Activated CD4-positive, alpha-beta T cell treated with anti-CD3 and anti-CD28 coated beads, Interleukin-2, amount 10 ng/mL, durations not matched to agents 7 days and 5 days (primary cell): ENCODE measurements at regions of chr3 and their contacts with region 1.

Region 1: DNA sequence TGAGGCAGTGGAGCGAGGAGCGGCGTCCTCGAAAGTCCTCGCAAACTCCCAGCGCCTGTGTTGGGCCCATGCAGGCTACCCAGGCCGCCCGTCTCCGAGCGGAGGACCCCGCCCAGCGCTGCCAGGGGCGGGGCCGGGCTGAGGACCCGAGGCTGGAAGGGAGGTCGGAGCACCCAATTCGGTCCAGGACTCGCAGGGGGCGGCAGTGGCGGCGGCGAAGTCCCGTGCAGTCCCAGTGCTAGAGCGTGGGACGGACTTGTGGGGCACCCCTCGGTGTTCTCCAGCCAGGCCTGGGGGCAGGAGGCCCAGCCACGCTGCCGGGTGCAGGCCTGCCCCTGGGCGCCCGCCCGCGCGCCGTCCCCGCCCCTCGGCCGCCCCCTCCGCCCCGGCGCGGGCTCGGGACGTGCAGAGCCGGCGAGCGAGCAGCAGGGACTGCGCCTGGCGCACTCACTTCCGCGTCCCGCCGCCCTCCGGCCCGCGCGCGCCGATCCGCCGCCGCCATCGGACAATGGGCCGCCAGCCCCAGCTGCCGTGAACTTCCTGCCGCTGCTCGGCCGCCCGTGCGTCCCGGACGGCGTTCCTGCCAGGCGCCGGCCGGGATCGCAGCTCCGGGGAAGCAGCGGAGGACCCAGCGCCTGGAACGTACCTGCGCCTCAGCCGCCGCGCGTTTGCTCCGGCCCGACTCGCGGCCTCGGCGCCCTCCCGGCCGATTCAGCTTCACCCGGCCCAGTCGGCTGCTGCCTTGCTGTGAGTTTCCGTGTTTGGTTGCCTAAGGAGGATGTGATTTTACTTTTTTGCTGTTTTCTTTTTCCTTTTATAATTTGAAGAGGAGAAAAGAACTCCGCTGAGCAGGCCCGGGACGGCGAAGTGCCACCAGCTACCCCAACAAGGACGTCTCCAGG is 592 bp upstream of the LIMD1 start:
- DNase-seq: peak; percentile 69
- H3K4me3 Mint-ChIP-seq: peak overlapping the region; percentile 87
- H3K27ac Mint-ChIP-seq: peak overlapping the region; percentile 91
- H3K4me1 Mint-ChIP-seq: peaks cover 55% of the 10 kb centered on the region
- H3K27me3 Mint-ChIP-seq: peaks cover 4% of the 10 kb centered on the region

Region 2: GRCh38 chr3:45258317-45258716 is 335.6 kb before region 1 on chr3:
- CTCF ChIA-PET with region 1: no interaction called
- POLR2A ChIA-PET with region 1: no interaction called
- DNase-seq: no peak
- H3K4me3 Mint-ChIP-seq: no peak overlapping the region
- H3K27ac Mint-ChIP-seq: no peak overlapping the region
- H3K4me1 Mint-ChIP-seq: no peaks in the 10 kb centered on the region
- H3K27me3 Mint-ChIP-seq: peaks cover 6% of the 10 kb centered on the region

Region 3: DNA sequence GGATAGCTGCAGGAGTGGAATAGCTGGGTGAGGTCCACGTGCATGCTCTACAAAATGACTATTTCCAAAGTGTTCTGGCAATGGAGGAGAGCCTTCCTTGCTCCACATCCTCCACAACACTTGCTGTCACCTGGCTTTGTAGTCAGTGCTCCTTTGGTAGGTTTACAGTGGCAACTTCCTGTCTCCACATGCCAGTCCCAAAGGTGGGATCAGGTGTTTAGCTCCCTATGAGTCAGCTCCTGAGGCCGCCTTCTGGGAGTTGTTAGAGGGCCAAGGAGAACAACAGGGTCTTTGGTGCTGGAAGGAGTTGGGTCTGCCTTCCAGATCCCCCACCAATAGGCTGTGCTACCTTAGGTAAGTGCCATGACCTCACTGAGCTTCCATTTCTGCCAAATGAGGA is 14.7 kb before region 1 on chr3:
- CTCF ChIA-PET with region 1: interaction called, 10 read pairs
- POLR2A ChIA-PET with region 1: no interaction called
- DNase-seq: no peak
- H3K4me3 Mint-ChIP-seq: no peak overlapping the region
- H3K27ac Mint-ChIP-seq: no peak overlapping the region
- H3K4me1 Mint-ChIP-seq: peaks cover 8% of the 10 kb centered on the region
- H3K27me3 Mint-ChIP-seq: peaks cover 11% of the 10 kb centered on the region

Region 4: DNA sequence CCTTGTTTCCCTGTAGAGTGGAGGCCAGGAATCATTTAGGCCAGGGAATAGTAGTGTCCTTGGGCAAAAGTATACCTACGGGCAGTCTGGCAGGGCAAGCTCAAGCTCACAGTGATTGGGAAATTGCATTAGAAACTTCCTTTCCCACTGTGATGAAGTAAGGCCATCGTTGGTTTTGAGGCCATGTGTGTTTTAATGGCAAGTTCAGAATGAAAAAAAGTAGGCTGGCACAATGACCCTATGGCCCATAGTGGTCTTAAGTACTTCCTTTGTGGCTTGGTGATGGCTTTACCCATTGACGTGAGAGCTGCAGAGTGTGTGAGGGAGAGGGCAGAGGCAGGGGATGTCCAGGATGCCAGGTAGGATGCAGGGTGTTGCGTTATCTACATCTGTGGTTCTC is 29.4 kb after region 1 on chr3:
- CTCF ChIA-PET with region 1: no interaction called
- POLR2A ChIA-PET with region 1: no interaction called
- DNase-seq: no peak
- H3K4me3 Mint-ChIP-seq: no peak overlapping the region
- H3K27ac Mint-ChIP-seq: no peak overlapping the region
- H3K4me1 Mint-ChIP-seq: peaks cover under 1% of the 10 kb centered on the region
- H3K27me3 Mint-ChIP-seq: no peaks in the 10 kb centered on the region